ENCODE measurements at regions of chr14 and their contacts with region 1.

Region 1: DNA sequence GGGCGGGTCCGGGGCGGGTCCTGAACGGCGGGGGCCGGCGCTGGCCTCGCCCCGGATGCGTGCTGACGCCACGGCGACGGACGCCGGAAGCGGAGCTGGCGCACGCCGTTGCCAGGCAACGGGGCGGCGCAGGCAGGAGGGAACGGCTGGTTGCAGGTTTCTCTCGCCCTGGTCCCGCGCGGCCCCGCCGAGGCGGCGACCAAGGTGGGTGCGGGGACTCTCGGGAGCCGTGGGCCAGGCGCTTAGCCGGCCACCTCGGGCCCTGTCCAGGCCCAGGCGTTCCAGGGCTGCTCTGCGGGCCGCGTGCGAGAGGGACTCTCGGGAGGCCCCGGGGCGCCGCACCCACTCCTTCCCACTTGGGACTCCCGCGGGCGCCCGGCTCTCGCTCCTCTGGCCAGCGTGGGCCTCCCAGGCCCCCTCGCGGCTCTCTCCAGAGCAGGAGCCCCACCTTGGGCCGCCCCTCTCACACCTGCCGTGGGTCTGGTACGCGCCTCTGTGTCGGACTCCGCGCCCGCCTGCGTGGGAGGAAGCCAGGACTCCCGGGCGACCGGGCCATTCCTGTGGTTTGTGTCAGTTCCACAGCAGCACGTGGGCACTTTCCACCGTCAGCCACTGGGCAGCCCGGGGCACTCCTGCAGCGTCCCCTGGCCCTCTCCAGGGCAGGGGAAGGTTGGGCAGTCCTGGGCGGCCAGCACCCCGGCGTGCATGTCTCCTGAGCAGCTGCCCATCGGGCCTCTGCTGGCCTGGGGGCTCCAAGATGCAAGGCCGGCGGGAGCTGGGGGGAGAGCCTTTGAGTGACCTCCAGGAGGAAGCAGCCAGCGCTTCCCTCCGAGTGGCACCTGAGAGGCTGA is at the start of gene CLBA1:
- DNase-seq: peak; percentile 93
- ATAC-seq: peak; percentile 99
- H3K4me3 Mint-ChIP-seq: peak within 1 kb of the TSS; percentile 64
- H3K27ac Mint-ChIP-seq: peak within 1 kb of the TSS; percentile 47
- H3K4me1 Mint-ChIP-seq: peaks cover 5% of the 10 kb centered on the region
- H3K27me3 Mint-ChIP-seq: no peaks in the 10 kb centered on the region
- total RNA-seq, gene CLBA1: 1.1 to 1.9 TPM

Region 2: GRCh38 chr14:105026803-105027563 is 41.1 kb after region 1 on chr14:
- CTCF ChIA-PET with region 1: interaction called, 3 read pairs
- POLR2A ChIA-PET with region 1: no interaction called
- intact Hi-C with region 1: loop called (anchors 1 to 5 kb)
- DNase-seq: no peak
- ATAC-seq: no peak
- H3K4me3 Mint-ChIP-seq: no peak overlapping the region
- H3K27ac Mint-ChIP-seq: peak overlapping the region; percentile 11
- H3K4me1 Mint-ChIP-seq: peaks cover 43% of the 10 kb centered on the region
- H3K27me3 Mint-ChIP-seq: no peaks in the 10 kb centered on the region

Region 3: GRCh38 chr14:105075379-105076295 is 89.7 kb after region 1 on chr14:
- CTCF ChIA-PET with region 1: no interaction called
- POLR2A ChIA-PET with region 1: no interaction called
- intact Hi-C with region 1: no loop called
- DNase-seq: peak; percentile 58
- ATAC-seq: peak; percentile 38
- H3K4me3 Mint-ChIP-seq: no peak overlapping the region
- H3K27ac Mint-ChIP-seq: no peak overlapping the region
- H3K4me1 Mint-ChIP-seq: peaks cover 34% of the 10 kb centered on the region
- H3K27me3 Mint-ChIP-seq: no peaks in the 10 kb centered on the region

Region 4: DNA sequence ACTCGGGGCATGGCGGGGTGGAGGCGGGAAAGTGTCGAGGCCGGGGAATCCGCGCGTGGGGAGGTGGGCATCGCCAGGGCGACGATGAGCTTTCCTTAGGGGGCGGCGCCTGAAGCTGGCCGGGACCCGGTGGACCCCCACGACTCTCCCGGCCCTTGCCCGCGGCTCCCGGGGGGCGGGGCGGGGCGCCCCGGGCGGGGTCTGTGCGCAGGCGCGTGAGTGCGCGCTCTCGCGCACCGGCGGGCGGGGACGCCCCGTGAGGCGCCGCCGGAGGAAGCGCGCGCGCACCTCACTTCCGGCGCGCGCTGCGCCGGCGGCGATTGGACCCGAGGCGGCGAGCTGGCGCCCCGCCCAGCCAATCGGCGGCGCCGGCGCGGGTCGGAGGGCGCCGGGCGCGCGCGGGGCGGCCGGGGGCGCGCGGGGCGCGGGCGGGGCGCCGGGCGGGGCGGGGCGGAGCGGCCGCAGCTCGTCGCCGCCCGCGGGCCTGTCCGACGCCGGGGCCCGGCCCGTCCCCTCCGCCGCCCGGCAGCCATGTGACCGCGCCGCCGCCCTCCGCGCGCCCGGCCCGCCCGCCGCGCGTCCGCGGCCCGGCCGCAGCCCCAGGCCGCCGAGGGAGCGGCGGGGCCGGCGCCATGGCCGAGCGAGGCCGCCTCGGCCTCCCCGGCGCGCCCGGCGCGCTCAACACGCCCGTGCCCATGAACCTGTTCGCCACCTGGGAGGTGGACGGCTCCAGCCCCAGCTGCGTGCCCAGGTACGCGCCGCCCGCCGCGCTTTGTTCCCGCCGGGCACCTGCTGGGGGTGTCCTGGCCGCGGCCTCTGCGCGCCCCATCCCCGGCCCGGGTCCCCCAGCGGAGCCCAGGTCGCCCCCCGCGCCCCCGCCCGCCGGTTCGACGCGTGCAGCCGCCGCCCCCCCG is 328.6 kb after region 1 on chr14 and contains the start of gene PACS2:
- CTCF ChIA-PET with region 1: no interaction called
- POLR2A ChIA-PET with region 1: no interaction called
- intact Hi-C with region 1: loop called in 1 of 2 experiments (anchors 1 kb)
- DNase-seq: peak; percentile 86
- ATAC-seq: peak; percentile 79
- H3K4me3 Mint-ChIP-seq: peak within 1 kb of the TSS; percentile 84
- H3K27ac Mint-ChIP-seq: peak within 1 kb of the TSS; percentile 71
- H3K4me1 Mint-ChIP-seq: peaks cover 30% of the 10 kb centered on the region
- H3K27me3 Mint-ChIP-seq: no peaks in the 10 kb centered on the region
- total RNA-seq, gene PACS2: 30.6 to 32.9 TPM